Panc1 (cell line): ENCODE measurements at regions of chr9 and their contacts with region 1.

Region 1: GRCh38 chr9:2159521-2160454 is 144.6 kb downstream of the SMARCA2 start:
- DNase-seq: no peak
- ATAC-seq: no peak
- H3K4me3 ChIP-seq: peak overlapping the region; percentile 11 to 31
- H3K27ac ChIP-seq: peak overlapping the region; percentile 23; the same call in 1 of the 2 replicates
- H3K4me1 ChIP-seq: no peaks in the 10 kb centered on the region
- H3K27me3 ChIP-seq: no peaks in the 10 kb centered on the region
- CTCF ChIP-seq: no peak

Region 2: GRCh38 chr9:2181792-2182191 is 22.0 kb after region 1 on chr9:
- CTCF ChIA-PET with region 1: no interaction called
- POLR2A ChIA-PET with region 1: no interaction called
- in situ Hi-C with region 1: no loop called
- intact Hi-C with region 1: no loop called
- DNase-seq: no peak
- ATAC-seq: no peak
- H3K4me3 ChIP-seq: no peak overlapping the region
- H3K27ac ChIP-seq: no peak overlapping the region
- H3K4me1 ChIP-seq: no peaks in the 10 kb centered on the region
- H3K27me3 ChIP-seq: no peaks in the 10 kb centered on the region
- CTCF ChIP-seq: peak; percentile 48

Region 3: DNA sequence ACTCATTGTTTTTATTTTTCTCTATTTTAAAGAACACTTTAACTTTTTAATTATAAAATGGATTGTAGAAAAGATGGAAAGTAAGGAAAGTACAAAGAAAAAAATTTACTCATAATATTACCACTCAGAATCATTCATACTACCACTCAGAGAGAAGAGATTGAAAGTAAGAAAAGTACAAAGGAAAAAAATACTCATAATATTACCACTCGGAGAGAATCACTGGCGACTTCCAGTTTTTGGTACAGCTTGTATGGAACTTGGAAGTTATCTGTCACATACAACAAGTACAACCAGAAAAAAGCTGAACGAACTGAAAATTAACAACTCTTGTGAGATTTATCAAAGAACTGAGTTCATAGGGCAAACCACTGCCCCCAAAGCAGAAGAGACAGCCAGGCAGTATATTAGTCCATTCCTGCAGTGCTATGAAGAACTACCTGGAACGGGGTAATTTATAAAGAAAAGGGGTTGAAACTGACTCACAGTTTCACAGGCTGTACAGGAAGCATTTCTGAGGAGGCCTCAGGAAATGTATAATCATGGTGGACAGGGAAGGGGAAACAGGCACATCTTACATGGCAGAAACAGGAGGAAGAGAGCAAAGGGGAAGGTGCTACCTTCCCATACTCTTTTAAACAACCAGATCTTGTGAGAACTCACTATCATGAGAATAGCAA is 39.3 kb after region 1 on chr9:
- CTCF ChIA-PET with region 1: no interaction called
- POLR2A ChIA-PET with region 1: no interaction called
- in situ Hi-C with region 1: no loop called
- intact Hi-C with region 1: loop called (anchors 1 kb)
- DNase-seq: no peak
- ATAC-seq: no peak
- H3K4me3 ChIP-seq: no peak overlapping the region
- H3K27ac ChIP-seq: no peak overlapping the region
- H3K4me1 ChIP-seq: no peaks in the 10 kb centered on the region
- H3K27me3 ChIP-seq: no peaks in the 10 kb centered on the region
- CTCF ChIP-seq: no peak